Heart left ventricle (tissue), 16 donors: ENCODE measurements at regions of chr17 and their contacts with region 1.

Region 1: GRCh38 chr17:38868817-38869525 is 887 bp upstream of the LASP1 start:
- DNase-seq: peak; percentile 86 to 90 (median 90)
- ATAC-seq: peak; percentile 74 to 80 (median 75)
- H3K4me3 ChIP-seq: peak overlapping the region; percentile 65 to 100 (median 84)
- H3K27ac ChIP-seq: peak overlapping the region; percentile 93 to 99 (median 96)
- H3K4me1 ChIP-seq: peaks cover 13 to 45% (median 34%) of the 10 kb centered on the region in 12 donors
- H3K27me3 ChIP-seq: no peaks in the 10 kb centered on the region
- CTCF ChIP-seq: peak in 7 of 12 donors; percentile 18 to 61 (median 33)
- POLR2A ChIP-seq: no peak

Region 2: DNA sequence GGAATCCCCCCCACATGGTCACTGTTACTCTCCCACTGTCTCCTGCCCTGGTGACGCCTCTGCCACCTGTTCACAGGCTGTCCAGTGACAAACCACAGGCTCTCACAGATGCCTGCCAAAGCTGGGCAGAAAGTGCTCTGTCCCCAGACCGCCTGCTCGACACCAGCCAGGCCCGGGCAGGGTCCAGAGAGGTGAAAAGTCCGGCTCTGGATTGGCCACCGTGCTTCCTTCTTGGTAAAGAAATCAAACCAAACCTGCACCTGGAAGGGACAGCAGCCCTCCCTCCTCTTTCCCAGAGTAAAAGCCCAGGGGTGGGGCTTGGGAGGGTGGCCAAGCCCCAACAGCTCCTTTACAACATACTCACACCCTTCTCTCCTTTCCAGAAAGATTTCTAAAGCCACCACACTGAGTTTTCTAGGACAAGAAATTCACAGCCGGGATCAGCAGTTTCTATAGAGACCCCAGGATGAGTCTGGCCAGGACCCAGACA is 127.0 kb before region 1 on chr17:
- intact Hi-C with region 1: no loop called
- DNase-seq: peak; percentile 54 to 78 (median 68)
- ATAC-seq: peak; percentile 75 to 84 (median 82)
- H3K4me3 ChIP-seq: peak overlapping the region in 3 of 12 donors; percentile 3 to 18 (median 14)
- H3K27ac ChIP-seq: peak overlapping the region; percentile 55 to 90 (median 74)
- H3K4me1 ChIP-seq: peaks cover 5 to 65% (median 49%) of the 10 kb centered on the region in 12 donors
- H3K27me3 ChIP-seq: no peaks in the 10 kb centered on the region
- CTCF ChIP-seq: no peak
- POLR2A ChIP-seq: no peak

Region 3: GRCh38 chr17:38752119-38752929 is 116.6 kb before region 1 on chr17 and contains the start of gene PSMB3:
- intact Hi-C with region 1: loop called in 1 of 10 experiments (anchors 5 kb)
- DNase-seq: peak; percentile 96 to 99 (median 98)
- ATAC-seq: peak; percentile 76 to 93 (median 88)
- H3K4me3 ChIP-seq: peak within 1 kb of the TSS; percentile 61 to 99 (median 94)
- H3K27ac ChIP-seq: peak within 1 kb of the TSS; percentile 37 to 99 (median 96)
- H3K4me1 ChIP-seq: peaks cover 0 to 62% (median 38%) of the 10 kb centered on the region in 12 donors
- H3K27me3 ChIP-seq: peaks cover 0 to 24% (median 0%) of the 10 kb centered on the region in 9 donors
- CTCF ChIP-seq: no peak
- POLR2A ChIP-seq: peak in 1 of 2 donors; percentile 51
- total RNA-seq, gene PSMB3: 145 to 305 (median 194) TPM

Region 4: DNA sequence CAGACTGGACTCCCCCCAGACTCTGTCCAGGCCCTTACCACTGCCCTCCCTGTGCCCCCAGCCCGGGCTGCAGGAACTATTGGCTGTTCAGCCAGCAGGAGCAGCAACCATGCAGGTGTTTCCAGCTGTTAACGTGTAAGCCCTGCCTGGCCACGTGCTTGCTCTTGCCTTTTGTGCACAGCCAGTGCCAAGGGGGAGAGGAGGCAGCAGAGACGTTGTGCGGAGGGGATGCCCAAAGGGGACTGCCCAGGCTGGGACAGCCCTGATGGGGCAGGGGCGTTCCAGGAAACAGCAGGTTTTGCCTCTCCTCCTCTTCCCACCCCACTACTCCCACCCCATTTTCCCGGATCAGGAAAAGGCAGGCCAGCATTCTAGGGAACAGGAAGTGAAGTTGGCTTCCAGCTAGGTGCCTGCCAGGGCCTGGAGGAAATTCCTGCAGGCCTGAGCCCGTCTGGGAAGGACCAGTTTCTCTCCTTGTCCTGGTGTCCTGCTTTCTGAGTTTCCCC is 39.8 kb after region 1 on chr17:
- intact Hi-C with region 1: loop called in 3 of 10 experiments (anchors 5 kb)
- DNase-seq: no peak
- ATAC-seq: peak in 3 of 4 donors; percentile 20 to 44 (median 43)
- H3K4me3 ChIP-seq: no peak overlapping the region
- H3K27ac ChIP-seq: peak overlapping the region in 11 of 12 donors; percentile 9 to 76 (median 57)
- H3K4me1 ChIP-seq: peaks cover 7 to 84% (median 52%) of the 10 kb centered on the region in 12 donors
- H3K27me3 ChIP-seq: no peaks in the 10 kb centered on the region
- CTCF ChIP-seq: no peak
- POLR2A ChIP-seq: no peak

Region 5: GRCh38 chr17:38967290-38967738 is 98.3 kb after region 1 on chr17 and contains the start of gene FBXO47:
- intact Hi-C with region 1: loop called in 5 of 10 experiments (anchors 5 to 10 kb)
- DNase-seq: peak; percentile 92 to 97 (median 94)
- ATAC-seq: peak; percentile 96 to 100 (median 99)
- H3K4me3 ChIP-seq: peak within 1 kb of the TSS in 10 of 12 donors; percentile 3 to 57 (median 42)
- H3K27ac ChIP-seq: peak within 1 kb of the TSS in 11 of 12 donors; percentile 40 to 80 (median 72)
- H3K4me1 ChIP-seq: peaks cover 0 to 10% (median 0%) of the 10 kb centered on the region in 12 donors
- H3K27me3 ChIP-seq: no peaks in the 10 kb centered on the region
- CTCF ChIP-seq: peak in 9 of 12 donors; percentile 6 to 63 (median 33)
- POLR2A ChIP-seq: peak in 1 of 2 donors; percentile 68
- total RNA-seq, gene FBXO47: 0.11 TPM in 1 of 9 donors, not detected in the others

Region 6: GRCh38 chr17:39164675-39165143 is 295.7 kb after region 1 on chr17:
- intact Hi-C with region 1: loop called in 3 of 10 experiments (anchors 10 kb)
- DNase-seq: peak; percentile 90 to 94 (median 93)
- ATAC-seq: peak; percentile 83 to 95 (median 92)
- H3K4me3 ChIP-seq: peak overlapping the region; percentile 40 to 68 (median 58)
- H3K27ac ChIP-seq: peak overlapping the region in 6 of 12 donors; percentile 19 to 65 (median 44)
- H3K4me1 ChIP-seq: peaks cover 0 to 51% (median 26%) of the 10 kb centered on the region in 12 donors
- H3K27me3 ChIP-seq: no peaks in the 10 kb centered on the region
- CTCF ChIP-seq: peak; percentile 70 to 87 (median 80)
- POLR2A ChIP-seq: peak in 1 of 2 donors; percentile 35